ENCODE measurements at regions of chr10 and their contacts with region 1.

Region 1: DNA sequence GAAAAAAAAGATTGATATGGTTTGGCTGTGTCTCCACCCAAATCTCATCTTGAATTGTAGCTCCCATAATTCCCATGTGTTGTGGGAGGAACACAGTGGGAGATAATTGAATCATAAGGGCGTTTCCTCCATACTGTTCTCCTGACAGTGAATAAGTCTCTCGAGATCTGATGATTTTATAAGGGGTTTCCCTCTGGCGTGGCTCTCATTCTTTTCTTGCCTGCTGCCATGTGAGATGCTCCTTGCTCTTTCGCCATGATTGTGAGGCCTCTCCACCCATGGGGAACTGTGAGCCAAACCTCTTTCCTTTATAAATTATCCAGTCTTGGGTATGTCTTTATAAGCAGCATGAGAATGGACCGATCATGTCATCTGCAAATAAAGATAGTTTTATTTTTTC is 29.4 kb upstream of the MAP3K8 start:
- DNase-seq: no peak
- H3K4me3 ChIP-seq: no peak overlapping the region
- CTCF ChIP-seq: no peak
- POLR2A ChIP-seq: no peak

Region 2: DNA sequence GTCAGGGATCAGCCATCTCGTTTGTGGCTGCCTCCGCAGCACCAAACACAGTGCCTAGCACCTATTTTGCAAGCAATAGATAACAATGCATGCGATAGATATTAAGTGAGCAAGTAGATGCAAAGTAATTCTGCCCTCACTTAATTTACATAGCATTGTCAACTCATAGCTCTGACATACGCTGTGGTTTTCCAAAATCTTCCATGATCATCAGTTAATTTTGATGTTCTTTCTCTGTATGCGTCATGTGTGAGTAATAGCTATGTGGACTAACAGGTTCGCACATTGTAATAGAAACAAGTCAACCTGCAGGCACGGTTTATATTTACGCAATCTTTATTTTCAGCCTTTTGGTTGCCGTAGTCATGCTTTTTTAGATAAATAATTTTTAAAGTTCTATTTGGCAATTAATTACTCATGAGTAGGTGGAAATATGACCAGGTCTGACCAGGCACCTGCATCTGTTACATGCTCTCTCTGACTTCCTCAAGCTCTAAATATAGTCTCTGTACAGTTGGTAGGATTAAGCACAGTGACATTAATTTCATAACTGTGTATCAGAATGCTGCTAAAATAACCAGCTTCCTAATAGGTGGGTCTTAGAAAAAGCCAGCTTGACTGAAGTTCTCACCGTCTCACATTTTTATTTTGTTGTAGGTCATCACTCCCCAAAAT is 42.7 kb after region 1 on chr10:
- intact Hi-C with region 1: no loop called
- DNase-seq: no peak
- H3K4me3 ChIP-seq: no peak overlapping the region
- CTCF ChIP-seq: no peak
- POLR2A ChIP-seq: no peak

Region 3: DNA sequence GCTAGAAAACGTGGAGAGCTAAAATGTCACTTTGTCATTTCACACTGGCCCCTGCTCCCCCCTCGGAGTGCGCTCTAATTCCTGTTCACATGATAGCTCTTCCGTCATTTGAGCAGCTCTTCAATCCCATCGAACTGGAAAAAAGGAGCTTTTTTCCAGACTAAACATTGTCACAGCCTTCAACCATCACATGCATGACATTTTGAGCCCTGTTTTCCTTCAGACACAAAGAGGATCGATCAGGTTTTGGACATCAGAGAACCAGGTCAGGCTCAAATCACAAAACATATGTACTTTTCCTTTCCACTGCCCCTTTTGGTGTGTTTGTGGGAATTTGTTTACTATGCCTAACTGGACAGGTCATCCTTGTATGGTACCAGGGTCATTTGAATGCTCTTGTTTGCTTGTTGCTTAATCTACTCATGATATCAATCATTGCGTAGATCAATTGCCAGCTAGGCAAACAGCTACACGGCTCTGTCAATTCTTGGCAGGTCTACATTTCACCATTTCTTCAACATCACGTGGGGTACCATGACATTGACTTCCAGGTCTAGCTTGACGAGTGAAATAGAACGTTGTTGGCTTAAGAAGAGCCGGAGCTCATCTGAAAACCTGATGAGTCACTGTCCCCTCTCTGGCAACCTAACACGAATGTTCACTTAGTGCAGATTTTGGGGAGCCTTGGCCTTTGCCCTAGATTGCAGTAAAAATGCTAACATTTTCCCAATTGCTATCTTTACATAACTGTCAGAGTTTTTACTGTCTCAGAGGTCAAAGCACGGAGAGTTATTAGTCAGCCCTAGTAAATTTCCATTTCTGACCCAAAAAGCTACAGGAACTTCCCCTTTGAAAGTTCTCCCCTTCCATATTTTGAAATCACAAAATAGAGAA is 137.7 kb after region 1 on chr10:
- intact Hi-C with region 1: loop called (anchors 5 kb)
- DNase-seq: no peak
- H3K4me3 ChIP-seq: no peak overlapping the region
- CTCF ChIP-seq: peak in 1 of 3 donors; percentile 45
- POLR2A ChIP-seq: no peak

Region 4: DNA sequence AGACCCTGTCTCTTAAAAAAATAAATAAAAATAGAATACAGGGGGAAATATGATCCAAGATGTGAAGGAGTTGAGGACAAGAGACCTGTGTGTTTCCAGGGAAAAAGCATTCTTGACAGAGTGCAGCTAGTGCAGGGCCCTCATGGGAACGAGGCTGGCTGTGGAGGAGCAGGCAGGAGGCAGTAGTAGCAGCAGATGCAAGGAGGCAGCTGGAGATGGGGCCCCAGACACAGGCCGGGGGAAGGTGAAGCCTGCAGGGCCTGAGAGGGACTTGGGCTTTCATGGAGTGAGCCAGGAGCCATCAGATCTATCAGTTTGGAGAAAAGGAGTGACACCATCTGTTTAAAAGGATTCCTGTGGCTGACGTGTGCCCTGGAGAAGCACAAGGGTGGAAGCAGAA is 698.6 kb after region 1 on chr10:
- intact Hi-C with region 1: no loop called
- DNase-seq: no peak
- H3K4me3 ChIP-seq: no peak overlapping the region
- CTCF ChIP-seq: no peak
- POLR2A ChIP-seq: no peak